ENCODE measurements at regions of chr9 and their contacts with region 1.

Region 1: DNA sequence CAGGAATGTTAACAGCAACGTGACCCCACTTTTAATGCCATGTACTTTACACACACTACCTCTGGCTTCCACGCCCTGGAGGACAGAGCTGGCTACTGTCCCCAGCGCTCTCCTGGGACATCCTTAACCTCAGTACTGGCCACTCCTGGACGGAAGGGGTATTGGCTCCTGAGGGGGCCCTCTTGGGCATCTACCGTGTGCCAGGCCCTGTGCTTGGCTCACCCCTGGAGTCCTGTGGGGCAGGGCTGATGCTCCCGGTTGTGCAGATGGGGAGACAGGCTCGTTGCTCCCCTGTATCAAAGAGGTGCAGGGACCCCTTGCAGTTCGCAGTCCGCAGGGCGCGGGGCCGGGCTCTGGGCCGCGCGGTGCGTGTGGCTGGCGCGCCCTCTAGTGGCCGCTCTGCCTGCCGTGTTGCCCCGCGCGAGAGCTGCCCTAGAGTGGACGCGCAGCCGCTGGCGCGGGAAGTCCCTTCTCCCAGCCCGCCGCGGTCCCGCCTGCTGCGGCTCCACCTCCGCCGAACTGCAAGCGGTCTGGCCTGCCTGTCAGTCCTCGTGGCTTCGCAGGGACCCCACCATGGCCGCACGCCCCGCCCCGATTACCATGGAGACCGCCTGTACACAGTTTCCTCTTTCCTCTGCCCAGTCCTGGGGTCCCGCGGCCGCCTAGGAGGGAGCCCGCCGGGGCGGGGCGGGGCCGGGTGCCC is at the start of gene WDR38:
- DNase-seq: peak; percentile 96
- H3K4me3 ChIP-seq: peak within 1 kb of the TSS; percentile 45 to 62
- H3K27ac ChIP-seq: no peak within 1 kb of the TSS
- H3K4me1 ChIP-seq: peaks cover 0 to 4% of the 10 kb centered on the region in 2 experiments; a peak in 1 of 4 replicates
- H3K27me3 ChIP-seq: no peaks in the 10 kb centered on the region
- CTCF ChIP-seq: peak; percentile 99
- EP300 ChIP-seq: no peak
- RAD21 ChIP-seq: peak; percentile 78
- polyA plus RNA-seq, gene WDR38: not detected in 2 replicates

Region 2: DNA sequence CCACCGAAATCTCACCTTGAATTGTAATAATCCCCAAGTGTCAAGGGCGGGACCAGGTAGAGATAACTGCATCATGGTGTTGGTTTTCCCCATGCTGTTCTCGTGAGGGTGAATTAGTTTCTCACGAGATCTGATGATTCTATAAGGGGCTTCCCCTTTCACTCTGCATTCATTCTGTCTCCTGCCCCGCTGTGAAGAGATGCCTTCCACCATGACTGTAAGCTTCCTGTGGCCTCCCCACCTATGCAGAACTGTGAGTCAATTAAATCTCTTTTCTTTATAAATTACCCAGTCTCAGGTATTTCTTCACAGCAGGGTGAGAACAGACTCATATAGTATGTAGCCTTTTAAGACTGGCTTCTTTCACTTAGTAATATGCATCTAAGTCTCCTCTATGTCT is 217.7 kb before region 1 on chr9:
- CTCF ChIA-PET with region 1: no interaction called
- POLR2A ChIA-PET with region 1: no interaction called
- DNase-seq: no peak
- H3K4me3 ChIP-seq: no peak overlapping the region
- H3K27ac ChIP-seq: no peak overlapping the region
- H3K4me1 ChIP-seq: peaks cover 0 to 7% of the 10 kb centered on the region in 2 experiments; a peak in 1 of 4 replicates
- H3K27me3 ChIP-seq: no peaks in the 10 kb centered on the region
- CTCF ChIP-seq: no peak
- EP300 ChIP-seq: no peak
- RAD21 ChIP-seq: no peak

Region 3: DNA sequence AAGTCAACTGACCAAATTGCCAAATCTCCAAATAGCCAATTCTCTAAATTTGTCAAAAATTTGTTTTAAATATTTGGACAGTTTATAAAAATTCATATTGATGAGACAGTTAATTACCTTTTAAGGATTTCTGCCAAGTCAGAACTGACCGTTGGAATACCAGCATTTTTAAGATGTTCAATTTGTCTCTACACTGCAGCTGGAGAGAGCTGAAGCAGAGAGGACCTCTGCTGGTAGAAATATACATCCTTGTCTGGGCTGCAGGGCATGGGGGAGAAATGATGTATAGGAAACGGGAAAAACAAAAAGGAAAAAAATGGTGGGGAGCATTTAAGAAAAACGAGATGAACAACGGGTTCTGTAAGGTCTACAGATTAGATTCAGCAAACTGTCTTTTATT is 98.7 kb before region 1 on chr9:
- CTCF ChIA-PET with region 1: interaction called, 61 read pairs
- POLR2A ChIA-PET with region 1: no interaction called
- DNase-seq: peak; percentile 31
- H3K4me3 ChIP-seq: no peak overlapping the region
- H3K27ac ChIP-seq: peak overlapping the region in 1 of 2 experiments; percentile 78; a peak in 2 of 4 replicates
- H3K4me1 ChIP-seq: peaks cover 7 to 56% of the 10 kb centered on the region in 2 experiments
- H3K27me3 ChIP-seq: no peaks in the 10 kb centered on the region
- CTCF ChIP-seq: peak; percentile 74
- EP300 ChIP-seq: no peak
- RAD21 ChIP-seq: peak; percentile 72

Region 4: DNA sequence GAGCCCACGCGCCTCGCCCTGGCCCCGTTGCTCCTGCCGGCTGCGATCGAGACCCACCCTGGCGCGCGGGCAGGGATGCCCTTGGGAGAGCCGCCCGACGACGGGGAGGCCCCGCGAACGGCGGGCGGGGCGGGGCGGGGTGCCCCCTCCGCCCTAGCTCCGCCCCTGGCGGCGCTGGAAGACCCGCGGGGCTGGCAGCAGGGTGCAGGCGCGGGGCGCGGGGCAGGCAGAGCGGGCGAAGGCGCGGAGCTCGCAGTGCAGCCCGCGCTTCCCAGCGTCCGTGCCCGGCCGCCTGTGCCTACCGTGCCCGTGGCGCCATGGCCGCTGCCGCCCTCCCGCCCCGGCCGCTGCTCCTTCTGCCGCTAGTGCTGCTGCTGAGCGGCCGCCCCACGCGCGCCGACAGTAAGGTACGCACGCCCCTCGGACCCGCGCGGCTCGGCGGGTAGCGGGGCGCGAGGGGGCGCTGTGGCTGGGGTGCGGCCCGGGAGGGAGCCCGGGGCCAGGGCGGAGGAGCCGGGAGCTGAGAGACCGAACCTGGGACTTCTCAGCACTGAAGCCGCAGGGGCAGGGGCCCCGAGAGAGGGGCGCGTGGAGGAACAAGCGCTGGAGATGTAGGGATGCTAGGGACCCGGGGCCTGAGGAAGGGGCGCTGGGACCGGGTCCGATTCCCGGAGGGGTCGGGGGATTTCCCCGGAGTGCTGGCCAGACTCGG is 75.9 kb before region 1 on chr9 and contains the start of gene OLFML2A:
- CTCF ChIA-PET with region 1: interaction called, 1,436 read pairs
- POLR2A ChIA-PET with region 1: interaction called, 42 read pairs
- DNase-seq: peak; percentile 86
- H3K4me3 ChIP-seq: peak within 1 kb of the TSS; percentile 52 to 59
- H3K27ac ChIP-seq: no peak within 1 kb of the TSS
- H3K4me1 ChIP-seq: peaks cover 3 to 14% of the 10 kb centered on the region in 2 experiments; a peak in 3 of 4 replicates
- H3K27me3 ChIP-seq: no peaks in the 10 kb centered on the region
- CTCF ChIP-seq: peak; percentile 52
- EP300 ChIP-seq: no peak
- RAD21 ChIP-seq: no peak
- polyA plus RNA-seq, gene OLFML2A: 4.8 and 7.7 TPM in 2 replicates

Region 5: DNA sequence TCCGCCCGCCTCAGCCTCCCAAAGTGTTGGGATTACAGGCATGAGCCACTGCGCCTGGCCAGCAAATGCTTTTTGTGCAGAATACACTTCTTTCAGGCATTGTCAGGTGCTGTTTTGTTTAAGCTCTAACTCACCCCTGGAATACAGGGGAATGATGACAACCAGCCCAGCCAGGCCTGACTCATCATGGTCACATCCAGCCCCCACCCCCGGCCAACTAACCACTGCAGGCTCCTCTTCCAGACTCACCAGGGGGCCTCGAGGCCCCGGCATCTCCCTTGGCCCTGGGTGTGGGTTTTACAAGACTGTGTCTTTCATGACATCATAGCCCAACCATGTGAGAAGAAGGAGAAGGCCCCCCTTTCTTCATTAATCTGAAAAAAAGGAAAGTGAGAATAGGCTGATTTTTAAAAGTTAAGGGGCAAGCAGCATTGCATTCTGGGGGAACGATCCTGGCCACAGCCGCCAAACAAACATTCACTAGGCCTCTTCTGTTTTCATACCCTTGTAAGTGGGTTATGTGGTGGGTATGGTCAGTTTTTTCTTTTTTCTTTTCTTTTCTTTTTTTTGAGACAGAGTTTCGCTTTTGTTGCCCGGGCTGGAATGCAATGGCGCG is 40.5 kb before region 1 on chr9:
- CTCF ChIA-PET with region 1: interaction called, 42 read pairs
- POLR2A ChIA-PET with region 1: no interaction called
- DNase-seq: peak; percentile 51
- H3K4me3 ChIP-seq: no peak overlapping the region
- H3K27ac ChIP-seq: peak overlapping the region in 1 of 2 experiments; percentile 72; a peak in 2 of 4 replicates
- H3K4me1 ChIP-seq: peaks cover 0 to 25% of the 10 kb centered on the region in 2 experiments; a peak in 3 of 4 replicates
- H3K27me3 ChIP-seq: no peaks in the 10 kb centered on the region
- CTCF ChIP-seq: 0 out of 2 replicates have a peak, but pooled peaks have one; percentile 13
- EP300 ChIP-seq: peak in 1 of 2 experiments; percentile 82; a peak in 2 of 4 replicates
- RAD21 ChIP-seq: no peak

Region 6: GRCh38 chr9:124839612-124840299 is 13.2 kb before region 1 on chr9:
- CTCF ChIA-PET with region 1: interaction called, 353 read pairs
- POLR2A ChIA-PET with region 1: interaction called, 4 read pairs
- DNase-seq: peak; percentile 77
- H3K4me3 ChIP-seq: no peak overlapping the region
- H3K27ac ChIP-seq: no peak overlapping the region
- H3K4me1 ChIP-seq: peaks cover 11% of the 10 kb centered on the region in 2 experiments; a peak in 3 of 4 replicates
- H3K27me3 ChIP-seq: no peaks in the 10 kb centered on the region
- CTCF ChIP-seq: peak; percentile 63
- EP300 ChIP-seq: no peak
- RAD21 ChIP-seq: peak; percentile 31

Region 7: GRCh38 chr9:124884376-124884775 is 31.4 kb after region 1 on chr9:
- CTCF ChIA-PET with region 1: no interaction called
- POLR2A ChIA-PET with region 1: no interaction called
- DNase-seq: no peak
- H3K4me3 ChIP-seq: no peak overlapping the region
- H3K27ac ChIP-seq: no peak overlapping the region
- H3K4me1 ChIP-seq: no peaks in the 10 kb centered on the region
- H3K27me3 ChIP-seq: no peaks in the 10 kb centered on the region
- CTCF ChIP-seq: no peak
- EP300 ChIP-seq: no peak
- RAD21 ChIP-seq: no peak

Measured in SK-N-SH (cell line).